Psoas muscle (tissue), 8 donors: ENCODE measurements at regions of chr20 and their contacts with region 1.

Region 1: GRCh38 chr20:528923-529604 is 14.5 kb downstream of the CSNK2A1 start:
- DNase-seq: no peak
- ATAC-seq: peak; percentile 82 to 97 (median 94)
- H3K4me3 ChIP-seq: no peak overlapping the region
- H3K27ac ChIP-seq: no peak overlapping the region
- H3K4me1 ChIP-seq: peaks cover 36% of the 10 kb centered on the region
- H3K27me3 ChIP-seq: no peaks in the 10 kb centered on the region
- CTCF ChIP-seq: no peak

Region 2: DNA sequence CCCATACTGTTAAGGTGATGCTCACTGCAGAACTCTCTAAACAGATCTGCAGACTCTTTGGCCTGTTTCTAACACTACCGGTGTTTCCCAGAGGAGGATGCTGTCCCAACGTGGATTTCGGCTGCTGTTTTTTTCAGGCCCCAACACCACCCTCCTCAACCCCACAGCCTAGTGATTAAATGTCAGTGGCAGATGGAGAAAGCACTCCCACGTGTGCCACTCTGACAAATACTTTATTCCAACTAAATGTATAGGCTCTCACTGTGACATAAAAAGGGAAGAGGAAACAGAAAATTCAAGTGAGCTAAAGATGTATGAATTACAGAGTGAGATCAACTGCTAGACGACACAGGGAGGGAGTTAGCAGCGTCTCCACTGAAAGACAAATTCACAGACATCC is 70.3 kb before region 1 on chr20:
- intact Hi-C with region 1: loop called in 1 of 2 experiments (anchors 10 kb)
- DNase-seq: no peak
- ATAC-seq: no peak
- H3K4me3 ChIP-seq: no peak overlapping the region
- H3K27ac ChIP-seq: peak overlapping the region; percentile 95
- H3K4me1 ChIP-seq: peaks cover 38% of the 10 kb centered on the region
- H3K27me3 ChIP-seq: no peaks in the 10 kb centered on the region
- CTCF ChIP-seq: no peak